ENCODE measurements at regions of chr11 and their contacts with region 1.

Region 1: DNA sequence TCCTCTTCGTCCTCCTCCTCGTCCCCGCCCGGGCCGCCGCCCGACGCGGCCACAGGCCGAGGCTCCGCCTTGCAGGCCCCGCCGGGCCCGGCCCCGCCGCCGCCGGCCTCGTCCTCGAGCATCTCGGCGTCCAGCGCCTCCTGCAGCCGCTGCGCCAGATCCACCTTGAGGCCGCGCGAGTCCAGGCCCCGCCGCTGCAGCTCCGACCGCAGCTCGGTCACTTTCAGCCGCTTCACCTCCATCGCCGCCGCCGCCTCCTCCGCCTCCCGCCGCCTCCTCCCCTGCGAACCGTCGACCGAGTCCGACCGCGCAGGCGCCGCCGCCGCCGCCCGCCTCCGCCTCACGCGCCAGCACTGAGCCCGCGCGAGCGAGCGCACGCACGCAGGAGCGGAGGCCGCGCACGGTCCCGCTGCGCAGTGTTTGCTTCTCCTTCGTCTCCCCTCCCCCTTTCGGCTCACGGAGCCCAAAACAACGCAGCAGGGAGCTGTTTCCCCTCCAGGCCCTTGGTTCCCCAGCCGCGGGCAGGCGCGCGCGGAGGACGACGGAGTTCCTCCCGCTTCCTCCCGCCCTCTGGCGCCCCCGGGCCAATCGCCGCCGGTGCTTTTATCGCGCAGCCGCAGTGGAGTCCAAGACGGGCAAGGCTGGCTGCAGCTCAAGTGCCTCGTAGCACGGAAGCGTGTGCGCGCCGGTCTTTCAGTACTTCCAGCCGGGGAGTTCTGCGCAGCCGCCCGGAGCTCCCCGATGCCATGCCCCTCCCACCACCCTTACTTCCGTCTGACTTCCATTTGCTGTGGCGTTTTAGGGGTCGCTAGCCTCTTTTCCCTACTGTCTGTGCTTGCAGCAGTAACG is at the start of gene HNRNPUL2:
- DNase-seq: peak; percentile 91 to 98
- H3K4me3 ChIP-seq: peak within 1 kb of the TSS; percentile 98 to 99
- H3K27ac ChIP-seq: peak within 1 kb of the TSS; percentile 92 to 95
- H3K4me1 ChIP-seq: peaks cover 5 to 42% of the 10 kb centered on the region in 2 donors
- H3K27me3 ChIP-seq: no peaks in the 10 kb centered on the region
- CTCF ChIP-seq: no peak
- total RNA-seq, gene HNRNPUL2: 14.6 TPM

Region 2: GRCh38 chr11:62514151-62514550 is 213.0 kb before region 1 on chr11:
- intact Hi-C with region 1: no loop called
- DNase-seq: no peak
- H3K4me3 ChIP-seq: no peak overlapping the region
- H3K27ac ChIP-seq: no peak overlapping the region
- H3K4me1 ChIP-seq: peaks cover 0 to 5% of the 10 kb centered on the region in 2 donors
- H3K27me3 ChIP-seq: no peaks in the 10 kb centered on the region
- CTCF ChIP-seq: no peak

Region 3: DNA sequence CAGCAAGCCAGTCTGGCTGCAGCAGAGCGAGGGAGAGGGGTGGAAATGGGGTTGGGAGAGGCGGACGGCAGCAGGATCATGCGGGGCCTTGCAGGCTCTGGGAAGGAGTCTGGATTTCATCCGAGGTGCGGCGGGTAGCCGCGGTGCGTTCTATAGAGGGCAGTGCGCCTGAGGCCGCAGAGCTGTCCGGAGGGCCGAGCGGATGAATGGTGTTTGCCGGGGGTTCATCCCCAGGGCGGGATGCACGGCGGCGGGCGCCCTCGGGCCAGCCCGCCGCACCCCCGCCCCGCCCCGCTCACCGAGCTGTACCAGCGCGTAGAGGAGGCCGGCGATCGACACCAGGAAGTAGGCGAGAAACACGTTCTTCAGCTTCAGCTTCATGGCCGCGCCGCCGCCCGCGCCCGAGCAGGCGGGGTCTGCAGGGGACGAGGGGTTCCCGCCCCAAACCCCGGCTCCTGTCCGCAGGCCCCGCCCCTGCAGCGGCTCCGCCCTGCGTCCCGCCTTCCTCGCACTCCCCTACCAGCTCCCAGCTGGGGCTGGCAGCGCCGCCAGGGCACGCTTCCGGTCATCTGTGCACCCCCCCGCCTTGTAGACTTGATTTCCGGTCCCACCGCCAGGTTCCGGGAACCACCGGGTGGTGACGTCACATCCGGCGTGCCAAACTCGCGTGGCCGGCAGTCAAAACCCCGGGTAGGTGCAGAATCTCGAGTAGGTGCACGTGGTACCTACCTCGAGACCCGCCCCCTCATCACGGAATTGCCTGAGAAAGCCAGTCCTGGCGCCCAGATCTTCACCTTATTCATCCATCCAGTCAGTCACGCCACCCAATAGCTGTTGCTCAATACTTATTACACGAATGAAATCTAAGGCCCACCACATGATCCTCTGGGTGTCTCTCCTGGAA is 105.3 kb before region 1 on chr11 and contains the start of gene B3GAT3:
- intact Hi-C with region 1: loop called (anchors 2 kb)
- DNase-seq: peak; percentile 92 to 99
- H3K4me3 ChIP-seq: peak within 1 kb of the TSS; percentile 69 to 93
- H3K27ac ChIP-seq: peak within 1 kb of the TSS; percentile 67 to 92
- H3K4me1 ChIP-seq: peaks cover 4 to 10% of the 10 kb centered on the region in 2 donors
- H3K27me3 ChIP-seq: no peaks in the 10 kb centered on the region
- CTCF ChIP-seq: peak in 1 of 3 experiments; percentile 1
- total RNA-seq, gene B3GAT3: 61.3 TPM

Region 4: DNA sequence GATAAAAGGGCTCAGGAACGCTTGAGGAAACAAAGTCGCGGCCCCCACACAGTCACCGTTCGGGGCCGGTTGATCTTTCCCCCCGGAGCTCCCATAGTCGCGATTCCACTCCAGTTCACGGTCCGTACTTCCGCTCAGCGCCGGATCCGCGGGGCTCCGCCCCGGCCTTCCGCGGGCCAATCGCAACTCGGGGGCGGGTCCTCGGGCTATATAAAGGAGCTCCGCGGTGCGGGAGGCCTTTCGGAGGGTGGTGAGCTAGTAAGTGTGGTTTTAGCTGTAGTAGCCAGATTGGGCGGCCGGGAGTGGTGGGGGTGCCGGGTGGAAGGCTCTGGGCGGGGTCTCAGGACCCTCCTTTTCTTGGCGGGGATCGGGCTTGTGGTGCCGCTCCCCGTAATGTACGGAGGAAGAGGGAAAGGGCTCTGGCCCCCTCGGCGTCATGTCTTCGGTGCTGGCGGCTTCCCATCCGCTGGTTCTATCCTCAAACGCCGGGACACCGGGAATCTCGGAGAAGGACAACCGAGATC is 62.0 kb before region 1 on chr11 and contains the starts of genes C11orf98 and CSKMT:
- intact Hi-C with region 1: loop called (anchors 2 kb)
- DNase-seq: peak; percentile 82 to 96
- H3K4me3 ChIP-seq: peak within 1 kb of the TSS; percentile 71 to 93
- H3K27ac ChIP-seq: peak within 1 kb of the TSS; percentile 80 to 89
- H3K4me1 ChIP-seq: peaks cover 10 to 20% of the 10 kb centered on the region in 2 donors
- H3K27me3 ChIP-seq: no peaks in the 10 kb centered on the region
- CTCF ChIP-seq: peak in 1 of 3 experiments; percentile 4
- total RNA-seq, gene C11orf98: 49.8 TPM
- total RNA-seq, gene CSKMT: not detected

Region 5: GRCh38 chr11:62753736-62754603 is 26.8 kb after region 1 on chr11 and contains the start of gene ZBTB3:
- intact Hi-C with region 1: loop called (anchors 1 kb)
- DNase-seq: peak; percentile 94 to 99
- H3K4me3 ChIP-seq: peak within 1 kb of the TSS; percentile 65 to 72
- H3K27ac ChIP-seq: peak within 1 kb of the TSS; percentile 86
- H3K4me1 ChIP-seq: peaks cover 11 to 15% of the 10 kb centered on the region in 2 donors
- H3K27me3 ChIP-seq: no peaks in the 10 kb centered on the region
- CTCF ChIP-seq: no peak
- total RNA-seq, gene ZBTB3: 2.9 TPM

Region 6: GRCh38 chr11:62787005-62787759 is 60.0 kb after region 1 on chr11 and contains the start of gene TMEM179B:
- intact Hi-C with region 1: loop called (anchors 1 kb)
- DNase-seq: peak; percentile 96 to 100
- H3K4me3 ChIP-seq: peak within 1 kb of the TSS; percentile 78 to 94
- H3K27ac ChIP-seq: peak within 1 kb of the TSS; percentile 86 to 97
- H3K4me1 ChIP-seq: peaks cover 4 to 25% of the 10 kb centered on the region in 2 donors
- H3K27me3 ChIP-seq: no peaks in the 10 kb centered on the region
- CTCF ChIP-seq: peak; percentile 59 to 75 (median 62)
- total RNA-seq, gene TMEM179B: 102 TPM

Region 7: GRCh38 chr11:62855571-62856332 is 128.6 kb after region 1 on chr11:
- intact Hi-C with region 1: loop called (anchors 5 kb)
- DNase-seq: peak; percentile 87 to 97
- H3K4me3 ChIP-seq: peak overlapping the region; percentile 77 to 78
- H3K27ac ChIP-seq: peak overlapping the region; percentile 59 to 69
- H3K4me1 ChIP-seq: peaks cover 10 to 15% of the 10 kb centered on the region in 2 donors
- H3K27me3 ChIP-seq: no peaks in the 10 kb centered on the region
- CTCF ChIP-seq: no peak

Measured in ascending aorta (tissue), 2 donors.